OCI-LY7 (cell line): ENCODE measurements at regions of chr1 and their contacts with region 1.

Region 1: GRCh38 chr1:167220537-167221125 is at the start of gene POU2F1:
- DNase-seq: peak; percentile 98
- H3K4me3 ChIP-seq: peak within 1 kb of the TSS; percentile 82
- H3K27ac ChIP-seq: peak within 1 kb of the TSS; percentile 94
- H3K4me1 ChIP-seq: peaks cover 29% of the 10 kb centered on the region
- CTCF ChIP-seq: peak; percentile 79
- total RNA-seq, gene POU2F1: 18.7 and 21.2 TPM in 2 replicates

Region 2: DNA sequence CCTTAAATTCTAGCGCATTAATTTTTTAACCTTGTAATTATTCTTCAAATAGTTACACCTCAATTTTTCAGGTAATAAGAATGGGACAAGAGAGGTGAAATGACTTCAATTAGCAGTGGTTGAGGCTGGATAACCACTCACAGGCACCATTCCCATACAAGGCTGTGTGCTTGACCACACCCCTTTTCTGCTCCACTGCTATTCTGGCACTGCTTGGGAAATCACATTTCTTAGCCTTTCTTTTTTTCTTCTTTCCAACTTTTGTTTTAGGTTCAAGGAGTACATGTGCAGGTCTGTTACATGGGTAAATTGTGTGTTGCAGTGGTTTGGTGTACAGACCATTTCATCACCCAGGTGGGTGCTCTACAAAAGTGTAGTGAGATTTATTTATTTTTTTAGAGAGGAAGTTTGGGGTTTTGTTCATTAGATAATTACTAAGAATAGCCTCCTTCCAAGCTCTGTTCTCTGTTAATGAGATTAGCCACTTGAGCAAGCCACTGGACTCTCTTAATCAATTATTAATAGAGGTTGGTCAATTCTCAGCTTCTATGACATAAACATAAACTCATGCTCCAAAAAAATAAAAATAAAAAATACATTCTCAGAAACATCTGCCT is 259.7 kb before region 1 on chr1:
- CTCF ChIA-PET with region 1: no interaction called
- POLR2A ChIA-PET with region 1: no interaction called
- intact Hi-C with region 1: no loop called
- DNase-seq: no peak
- H3K4me3 ChIP-seq: no peak overlapping the region
- H3K27ac ChIP-seq: no peak overlapping the region
- H3K4me1 ChIP-seq: no peaks in the 10 kb centered on the region
- CTCF ChIP-seq: no peak

Region 3: GRCh38 chr1:167066333-167067122 is 154.1 kb before region 1 on chr1:
- CTCF ChIA-PET with region 1: no interaction called
- POLR2A ChIA-PET with region 1: interaction called, 4 read pairs
- intact Hi-C with region 1: loop called (anchors 1 kb)
- DNase-seq: peak; percentile 73
- H3K4me3 ChIP-seq: peak overlapping the region; percentile 44
- H3K27ac ChIP-seq: no peak overlapping the region
- H3K4me1 ChIP-seq: no peaks in the 10 kb centered on the region
- CTCF ChIP-seq: peak; percentile 96

Region 4: DNA sequence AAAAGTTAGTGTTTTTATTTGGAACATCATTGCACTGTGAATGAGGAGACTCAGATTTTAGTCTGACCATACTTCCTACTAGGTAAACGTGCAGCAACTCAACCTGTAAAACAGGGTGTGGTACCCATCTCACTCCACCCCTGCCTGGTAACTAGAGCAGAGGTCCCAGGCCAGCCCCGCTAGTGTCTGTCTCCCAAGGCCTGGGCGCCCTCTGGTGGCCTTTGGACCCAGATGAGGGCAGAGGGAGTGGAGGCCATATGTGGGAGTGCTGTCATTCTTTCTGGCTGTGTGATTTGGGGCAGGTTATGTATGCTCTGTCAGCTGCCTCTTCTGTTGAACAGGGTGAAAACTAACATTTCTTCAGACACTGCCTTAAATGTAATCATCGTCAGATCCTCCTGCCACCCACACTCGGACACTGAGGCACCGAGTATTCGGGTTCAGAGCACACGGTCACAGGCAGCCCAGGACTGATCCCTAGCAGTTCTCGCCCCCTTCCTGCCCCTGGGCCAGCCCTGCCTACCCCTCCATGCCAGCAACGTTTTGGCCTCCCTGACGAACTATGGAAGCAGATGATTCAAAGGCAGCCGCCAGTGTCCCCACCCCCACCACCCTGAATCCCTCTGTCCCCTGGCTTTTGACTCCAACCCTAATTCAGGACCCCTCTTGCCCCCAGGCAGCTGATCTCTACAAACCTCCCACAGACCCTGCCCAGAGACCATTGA is 221.7 kb after region 1 on chr1:
- CTCF ChIA-PET with region 1: no interaction called
- POLR2A ChIA-PET with region 1: interaction called, 9 read pairs
- intact Hi-C with region 1: loop called (anchors 1 kb)
- DNase-seq: peak; percentile 92
- H3K4me3 ChIP-seq: no peak overlapping the region
- H3K27ac ChIP-seq: no peak overlapping the region
- H3K4me1 ChIP-seq: peaks cover 29% of the 10 kb centered on the region
- CTCF ChIP-seq: peak; percentile 96

Region 5: DNA sequence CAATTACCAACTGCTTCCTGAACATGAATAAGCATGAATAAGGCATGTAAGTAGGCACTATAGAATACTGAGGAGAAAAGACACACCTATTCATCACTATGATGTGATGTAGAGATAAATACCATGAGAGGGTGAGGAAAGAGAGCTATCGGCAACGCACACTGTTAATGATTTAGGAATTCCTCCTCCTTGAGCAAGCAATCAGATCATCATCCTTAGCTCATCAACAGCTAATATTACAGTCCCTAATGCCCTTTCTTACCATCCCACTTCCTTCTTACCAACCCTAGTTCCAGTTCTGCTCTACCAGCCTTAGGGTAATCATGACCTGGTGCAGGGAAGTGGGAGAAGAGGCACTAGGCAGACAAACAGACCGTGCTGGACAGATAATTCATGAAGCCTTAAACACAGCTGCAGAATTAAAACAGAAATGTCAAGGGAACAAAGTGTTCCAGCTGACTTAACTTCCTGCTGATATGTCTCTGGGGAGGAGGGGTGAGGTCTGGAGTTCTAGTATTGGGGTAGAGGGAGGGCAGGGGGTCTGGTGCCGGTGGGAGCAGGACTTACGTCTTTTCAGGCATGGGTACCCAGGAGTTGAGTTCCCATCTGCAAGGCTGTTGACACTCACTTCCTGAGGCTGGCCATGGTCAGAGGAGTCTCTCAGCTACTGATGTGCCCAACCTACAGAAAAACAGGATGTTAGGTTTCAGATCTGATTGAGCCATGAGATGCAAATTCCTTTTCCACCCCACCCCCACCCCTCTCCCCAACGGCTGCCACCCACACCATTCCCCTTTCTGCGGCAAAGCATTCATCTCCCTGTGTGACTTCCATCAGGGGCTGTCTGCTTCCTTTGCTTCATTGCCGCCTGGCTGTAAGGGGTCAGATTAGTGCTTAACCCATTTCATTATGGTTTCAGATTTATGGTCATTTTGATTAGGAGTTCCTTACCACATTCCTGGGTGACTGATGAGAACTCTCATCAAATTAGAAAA is 396.8 kb after region 1 on chr1:
- CTCF ChIA-PET with region 1: no interaction called
- POLR2A ChIA-PET with region 1: no interaction called
- intact Hi-C with region 1: loop called (anchors 5 kb)
- DNase-seq: peak; percentile 98
- H3K4me3 ChIP-seq: peak overlapping the region; percentile 68
- H3K27ac ChIP-seq: peak overlapping the region; percentile 96
- H3K4me1 ChIP-seq: peaks cover 83% of the 10 kb centered on the region
- CTCF ChIP-seq: no peak